Activated CD8-positive, alpha-beta T cell treated with anti-CD3 and anti-CD28 coated beads for 36 hours (primary cell): ENCODE measurements at regions of chr12 and their contacts with region 1.

Region 1: GRCh38 chr12:53213348-53213747 is 6.3 kb upstream of the ITGB7 start:
- DNase-seq: peak; percentile 90
- ATAC-seq: peak; percentile 63
- H3K4me3 Mint-ChIP-seq: no peak overlapping the region
- H3K27ac Mint-ChIP-seq: no peak overlapping the region
- H3K4me1 Mint-ChIP-seq: peaks cover 68% of the 10 kb centered on the region
- H3K27me3 Mint-ChIP-seq: no peaks in the 10 kb centered on the region
- CTCF ChIP-seq: peak; percentile 97

Region 2: GRCh38 chr12:53145383-53146260 is 67.7 kb before region 1 on chr12:
- CTCF ChIA-PET with region 1: no interaction called
- POLR2A ChIA-PET with region 1: no interaction called
- intact Hi-C with region 1: no loop called
- DNase-seq: no peak
- ATAC-seq: no peak
- H3K4me3 Mint-ChIP-seq: no peak overlapping the region
- H3K27ac Mint-ChIP-seq: no peak overlapping the region
- H3K4me1 Mint-ChIP-seq: no peaks in the 10 kb centered on the region
- H3K27me3 Mint-ChIP-seq: no peaks in the 10 kb centered on the region
- CTCF ChIP-seq: no peak

Region 3: GRCh38 chr12:53180220-53180930 is 33.0 kb before region 1 on chr12 and contains the starts of genes CSAD and ZNF740:
- CTCF ChIA-PET with region 1: interaction called, 14 read pairs
- POLR2A ChIA-PET with region 1: interaction called, 14 read pairs
- intact Hi-C with region 1: no loop called
- DNase-seq: peak; percentile 99
- ATAC-seq: peak; percentile 95
- H3K4me3 Mint-ChIP-seq: peak within 1 kb of the TSS; percentile 89
- H3K27ac Mint-ChIP-seq: peak within 1 kb of the TSS; percentile 96
- H3K4me1 Mint-ChIP-seq: peaks cover 51% of the 10 kb centered on the region
- H3K27me3 Mint-ChIP-seq: no peaks in the 10 kb centered on the region
- CTCF ChIP-seq: no peak
- total RNA-seq, gene CSAD: 13.8 to 18.6 TPM
- total RNA-seq, gene ZNF740: 31.3 to 35.9 TPM

Region 4: DNA sequence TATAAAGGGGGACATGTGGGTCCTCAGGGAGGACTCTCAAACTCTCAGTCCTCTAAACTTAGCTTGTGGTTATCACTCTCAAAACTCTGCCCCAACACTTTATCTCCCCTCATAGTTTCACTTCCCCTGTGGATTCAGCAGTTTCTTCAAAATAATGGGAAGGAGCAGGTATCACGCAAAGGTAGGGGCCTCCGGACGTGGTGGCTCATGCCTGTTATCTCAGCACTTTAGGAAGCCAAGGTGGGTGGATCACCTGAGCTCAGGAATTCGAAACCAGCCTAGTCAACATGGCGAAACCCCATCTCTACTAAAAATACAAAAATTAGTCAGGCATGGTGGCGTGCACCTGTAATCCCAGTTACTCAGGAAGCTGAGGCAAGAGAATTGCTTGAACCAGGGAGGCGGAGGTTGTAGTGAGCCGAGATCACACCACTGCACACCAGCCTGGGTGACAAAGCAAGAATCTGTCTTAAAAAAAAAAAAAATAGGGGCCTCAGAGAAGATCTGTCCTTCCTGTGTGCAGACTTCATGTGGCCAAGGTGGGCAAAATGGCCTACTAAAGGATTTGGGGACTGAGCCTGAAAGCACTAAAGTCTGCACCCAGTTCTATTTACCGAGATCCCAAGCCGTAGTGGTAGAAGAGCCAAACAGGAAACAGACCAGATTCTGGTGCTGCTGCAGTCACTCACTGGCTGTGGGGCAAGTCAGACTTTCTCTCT is 12.7 kb before region 1 on chr12:
- CTCF ChIA-PET with region 1: interaction called, 32 read pairs
- POLR2A ChIA-PET with region 1: interaction called, 78 read pairs
- intact Hi-C with region 1: no loop called
- DNase-seq: peak; percentile 64
- ATAC-seq: peak; percentile 41
- H3K4me3 Mint-ChIP-seq: peak overlapping the region; percentile 43
- H3K27ac Mint-ChIP-seq: peak overlapping the region; percentile 83
- H3K4me1 Mint-ChIP-seq: peaks cover 70% of the 10 kb centered on the region
- H3K27me3 Mint-ChIP-seq: no peaks in the 10 kb centered on the region
- CTCF ChIP-seq: no peak

Region 5: DNA sequence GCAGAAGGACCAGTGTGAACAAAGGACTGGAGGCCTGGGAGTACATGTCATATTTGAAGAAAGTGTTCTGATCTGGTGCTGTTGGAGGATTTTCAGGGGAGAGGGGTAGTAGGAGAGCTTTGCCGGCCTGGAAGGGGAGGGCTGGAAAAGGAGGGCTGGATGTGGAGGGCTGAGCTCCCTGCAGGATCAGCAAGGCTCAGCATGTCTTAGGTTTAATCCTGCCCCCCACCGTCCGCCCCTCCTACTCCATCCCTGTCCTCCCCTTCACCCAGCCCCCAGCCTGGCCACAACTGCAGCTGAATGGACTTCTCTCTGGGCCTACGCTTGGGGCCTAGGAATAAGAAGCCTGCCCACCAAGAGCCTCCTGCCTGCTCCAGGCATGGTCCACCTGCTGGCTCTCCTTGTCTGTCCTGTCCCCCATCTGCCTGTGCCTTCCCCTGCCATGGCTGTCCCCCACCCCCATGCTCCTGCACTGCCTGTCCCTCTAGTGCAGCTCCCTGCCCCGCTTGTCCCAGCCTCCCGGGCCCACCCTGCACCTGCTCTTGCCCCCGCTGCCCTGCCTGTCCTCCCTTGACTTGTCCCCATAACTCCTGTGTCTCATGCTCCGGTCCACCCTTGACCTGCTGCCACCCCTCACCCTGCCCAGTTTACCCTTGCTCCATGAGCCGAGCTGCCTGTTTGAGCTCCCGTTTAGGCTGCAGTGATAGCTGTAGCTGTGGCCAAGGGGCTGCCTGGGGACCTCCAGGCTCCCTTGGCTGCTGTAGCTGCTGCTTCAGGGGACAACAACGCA is 28.5 kb after region 1 on chr12:
- CTCF ChIA-PET with region 1: interaction called, 45 read pairs
- POLR2A ChIA-PET with region 1: interaction called, 47 read pairs
- intact Hi-C with region 1: no loop called
- DNase-seq: no peak
- ATAC-seq: no peak
- H3K4me3 Mint-ChIP-seq: no peak overlapping the region
- H3K27ac Mint-ChIP-seq: no peak overlapping the region
- H3K4me1 Mint-ChIP-seq: peaks cover 9% of the 10 kb centered on the region
- H3K27me3 Mint-ChIP-seq: no peaks in the 10 kb centered on the region
- CTCF ChIP-seq: no peak

Region 6: DNA sequence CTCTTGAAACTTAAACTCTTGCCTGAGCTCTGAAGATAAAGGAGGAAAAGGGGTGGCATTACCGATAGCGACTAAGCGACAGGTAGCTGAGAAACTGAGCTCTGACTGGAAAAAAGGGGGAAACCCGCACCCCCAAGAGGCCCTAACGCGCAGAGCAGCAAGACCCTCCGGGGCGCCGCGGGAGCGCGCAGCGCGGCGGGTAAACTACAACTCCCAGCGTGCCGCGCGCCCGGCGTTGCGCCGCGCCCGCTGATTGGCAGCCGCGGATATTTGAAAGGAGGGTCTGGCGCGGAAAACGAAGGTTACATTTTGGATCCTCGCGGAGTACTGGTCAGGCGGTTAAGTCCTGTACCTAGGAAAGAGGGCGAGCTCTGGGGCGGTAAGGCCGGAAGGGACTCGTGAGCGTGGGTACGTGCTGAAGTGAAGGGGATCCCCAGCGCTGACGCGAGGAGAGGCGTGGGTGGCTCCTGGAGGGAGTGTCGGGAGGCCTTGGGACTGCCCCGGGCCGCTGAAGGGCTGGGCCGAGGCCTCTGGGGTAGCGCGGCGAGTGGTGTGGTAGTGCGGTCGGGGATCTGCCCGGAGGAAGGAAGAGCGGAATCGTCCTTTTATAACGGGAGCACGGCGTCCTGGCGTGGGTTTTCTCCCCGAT is 54.8 kb after region 1 on chr12 and contains the start of gene ESPL1:
- CTCF ChIA-PET with region 1: interaction called, 213 read pairs
- POLR2A ChIA-PET with region 1: interaction called, 38 read pairs
- intact Hi-C with region 1: loop called (anchors 5 kb)
- DNase-seq: peak; percentile 95
- ATAC-seq: peak; percentile 89
- H3K4me3 Mint-ChIP-seq: peak within 1 kb of the TSS; percentile 94
- H3K27ac Mint-ChIP-seq: peak within 1 kb of the TSS; percentile 97
- H3K4me1 Mint-ChIP-seq: peaks cover 33% of the 10 kb centered on the region
- H3K27me3 Mint-ChIP-seq: no peaks in the 10 kb centered on the region
- CTCF ChIP-seq: peak; percentile 56
- total RNA-seq, gene ESPL1: 62.1 to 63.4 TPM

Region 7: GRCh38 chr12:53287741-53288216 is 74.4 kb after region 1 on chr12:
- CTCF ChIA-PET with region 1: interaction called, 130 read pairs
- POLR2A ChIA-PET with region 1: interaction called, 3 read pairs
- intact Hi-C with region 1: loop called (anchors 5 kb)
- DNase-seq: peak; percentile 80
- ATAC-seq: peak; percentile 85
- H3K4me3 Mint-ChIP-seq: no peak overlapping the region
- H3K27ac Mint-ChIP-seq: no peak overlapping the region
- H3K4me1 Mint-ChIP-seq: peaks cover 17% of the 10 kb centered on the region
- H3K27me3 Mint-ChIP-seq: no peaks in the 10 kb centered on the region
- CTCF ChIP-seq: peak; percentile 57

Region 8: DNA sequence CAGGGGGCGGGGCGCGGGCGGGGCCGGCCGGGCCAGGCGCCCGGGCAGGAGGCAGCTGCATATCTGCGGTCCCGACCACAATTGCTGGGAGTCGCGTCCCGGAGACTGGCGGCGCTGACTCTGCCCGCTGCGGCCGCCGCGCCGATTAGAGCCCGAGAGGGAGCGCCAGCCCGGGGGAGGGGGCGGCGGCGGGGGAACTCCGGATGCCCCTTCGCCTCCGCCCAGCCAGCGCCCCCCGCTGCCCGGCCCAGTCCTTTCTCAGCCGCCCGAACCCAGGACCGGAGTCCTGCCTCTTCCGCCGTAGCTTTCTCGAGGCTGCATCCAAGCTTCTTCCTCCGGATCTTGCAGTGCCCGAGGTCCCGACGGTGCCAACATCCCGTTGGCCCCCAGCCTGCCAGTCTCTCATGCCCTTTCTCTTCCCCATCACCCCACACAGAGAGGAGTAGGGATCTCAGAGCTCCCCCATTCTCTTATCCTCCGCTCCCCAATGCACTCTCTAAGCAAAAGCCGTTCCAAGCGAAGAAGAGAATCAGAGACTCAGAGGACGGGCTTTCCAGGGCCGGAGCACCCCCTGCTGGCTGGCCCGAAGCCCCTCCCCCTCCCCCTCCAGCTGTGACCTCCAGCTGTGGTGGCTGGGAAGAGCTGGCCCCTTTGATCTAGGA is 131.6 kb after region 1 on chr12:
- CTCF ChIA-PET with region 1: interaction called, 21 read pairs
- POLR2A ChIA-PET with region 1: interaction called, 5 read pairs
- intact Hi-C with region 1: no loop called
- DNase-seq: peak; percentile 85
- ATAC-seq: peak; percentile 86
- H3K4me3 Mint-ChIP-seq: peak overlapping the region; percentile 82
- H3K27ac Mint-ChIP-seq: peak overlapping the region; percentile 71
- H3K4me1 Mint-ChIP-seq: peaks cover 19% of the 10 kb centered on the region
- H3K27me3 Mint-ChIP-seq: peaks cover 3% of the 10 kb centered on the region
- CTCF ChIP-seq: peak; percentile 75